ENCODE measurements at regions of chr20 and their contacts with region 1.

Region 1: DNA sequence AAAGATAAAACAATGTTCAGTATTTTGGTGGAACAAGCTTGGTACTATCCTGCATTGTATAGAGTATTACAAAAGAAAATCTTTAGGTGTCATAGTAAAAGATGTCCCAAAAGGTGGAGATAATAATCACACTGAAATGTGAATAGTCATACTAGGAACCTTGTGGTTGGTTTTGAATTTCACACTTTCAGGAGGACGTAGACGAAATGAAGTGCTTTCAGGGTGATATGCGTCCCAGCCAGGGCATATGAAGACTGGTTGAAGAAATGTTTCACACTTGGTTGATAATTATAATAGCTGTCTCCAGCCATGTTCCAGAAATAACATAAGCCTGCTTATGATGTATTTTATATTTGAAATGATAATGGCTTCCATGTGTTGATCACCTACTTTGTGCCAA is 60.4 kb downstream of the SCAND1 start:
- DNase-seq: peak; percentile 76
- ATAC-seq: peak; percentile 98
- H3K4me3 ChIP-seq: no peak overlapping the region
- H3K27ac ChIP-seq: no peak overlapping the region
- H3K4me1 ChIP-seq: peaks cover 30% of the 10 kb centered on the region
- H3K27me3 ChIP-seq: no peaks in the 10 kb centered on the region
- CTCF ChIP-seq: no peak
- EP300 ChIP-seq: peak; percentile 55 to 63; a peak in 3 of 4 replicates
- POLR2A ChIP-seq: no peak
- RAD21 ChIP-seq: no peak

Region 2: DNA sequence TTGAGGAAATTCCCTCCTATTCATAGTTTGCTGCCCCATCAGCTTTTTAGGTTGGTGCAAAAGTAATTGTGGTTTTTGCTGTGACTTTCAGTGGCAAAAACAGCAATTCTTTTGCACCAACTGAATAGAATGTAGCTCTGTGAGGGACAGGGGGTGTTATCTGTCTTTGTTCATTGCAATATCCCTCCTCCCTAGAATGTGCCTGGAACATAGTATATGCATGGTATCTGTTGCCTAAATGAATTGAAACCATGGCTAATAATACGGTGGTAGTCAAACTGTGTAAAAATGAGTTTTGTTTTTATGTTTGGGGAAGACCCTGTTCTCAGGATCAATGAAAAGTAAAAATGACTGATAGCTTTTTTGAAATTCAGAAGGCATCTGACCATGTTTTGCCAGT is 15.2 kb after region 1 on chr20:
- CTCF ChIA-PET with region 1: interaction called, 4 read pairs
- POLR2A ChIA-PET with region 1: interaction called, 5 read pairs
- RAD21 ChIA-PET with region 1: interaction called, 5 read pairs
- SMC1A ChIA-PET with region 1: interaction called, 11 read pairs
- in situ Hi-C with region 1: no loop called
- intact Hi-C with region 1: loop called (anchors 1 kb)
- DNase-seq: peak; percentile 20
- ATAC-seq: peak; percentile 90
- H3K4me3 ChIP-seq: no peak overlapping the region
- H3K27ac ChIP-seq: no peak overlapping the region
- H3K4me1 ChIP-seq: peaks cover 22% of the 10 kb centered on the region
- H3K27me3 ChIP-seq: no peaks in the 10 kb centered on the region
- CTCF ChIP-seq: no peak
- EP300 ChIP-seq: no peak
- POLR2A ChIP-seq: no peak
- RAD21 ChIP-seq: no peak